ENCODE measurements at regions of chr16 and their contacts with region 1.

Region 1: GRCh38 chr16:22353191-22353919 is 21.1 kb downstream of the CDR2 start:
- DNase-seq: no peak
- ATAC-seq: peak; percentile 76
- H3K4me3 Mint-ChIP-seq: no peak overlapping the region
- H3K27ac Mint-ChIP-seq: peak overlapping the region; percentile 90
- H3K4me1 Mint-ChIP-seq: peaks cover 62% of the 10 kb centered on the region
- H3K27me3 Mint-ChIP-seq: no peaks in the 10 kb centered on the region

Region 2: DNA sequence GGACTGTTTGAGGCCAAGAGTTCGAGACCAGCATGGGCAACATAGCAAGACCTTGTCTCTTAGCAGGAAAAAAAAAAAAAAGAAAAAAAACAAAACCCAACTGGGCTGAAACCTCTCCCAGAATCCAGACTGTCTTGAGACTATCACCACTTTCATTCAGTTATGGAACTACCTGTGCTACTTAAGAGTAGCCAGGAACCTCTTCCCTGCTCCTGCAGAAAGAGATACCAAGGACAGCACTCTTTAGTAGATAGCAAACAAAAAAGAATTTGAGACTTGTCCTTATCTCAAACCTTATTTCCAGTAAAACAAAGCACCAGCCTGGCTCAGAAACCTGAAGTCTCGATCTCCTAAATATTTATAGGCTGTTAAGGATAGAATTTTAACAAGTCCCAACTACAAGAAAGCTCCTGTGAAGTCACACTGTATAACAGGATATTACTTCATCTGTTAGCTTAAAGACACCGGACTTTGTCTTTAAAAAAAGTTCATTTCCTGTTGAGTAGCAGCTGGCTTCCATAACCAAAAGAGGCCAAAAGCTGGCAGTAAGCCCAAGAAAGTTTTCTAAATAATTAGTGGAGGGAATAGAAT is 16.0 kb after region 1 on chr16:
- CTCF ChIA-PET with region 1: interaction called, 11 read pairs
- POLR2A ChIA-PET with region 1: interaction called, 14 read pairs
- intact Hi-C with region 1: loop called (anchors 1 to 2 kb)
- DNase-seq: no peak
- ATAC-seq: no peak
- H3K4me3 Mint-ChIP-seq: no peak overlapping the region
- H3K27ac Mint-ChIP-seq: peak overlapping the region; percentile 69
- H3K4me1 Mint-ChIP-seq: peaks cover 77% of the 10 kb centered on the region
- H3K27me3 Mint-ChIP-seq: no peaks in the 10 kb centered on the region

Region 3: GRCh38 chr16:22424161-22424937 is 71.0 kb after region 1 on chr16:
- CTCF ChIA-PET with region 1: no interaction called
- POLR2A ChIA-PET with region 1: no interaction called
- intact Hi-C with region 1: no loop called
- DNase-seq: no peak
- ATAC-seq: no peak
- H3K4me3 Mint-ChIP-seq: no peak overlapping the region
- H3K27ac Mint-ChIP-seq: peak overlapping the region; percentile 8
- H3K4me1 Mint-ChIP-seq: no peaks in the 10 kb centered on the region
- H3K27me3 Mint-ChIP-seq: no peaks in the 10 kb centered on the region

Measured in activated CD4-positive, alpha-beta T cell treated with anti-CD3 and anti-CD28 coated beads for 36 hours (primary cell).